ENCODE measurements at regions of chr15 and their contacts with region 1.

Region 1: GRCh38 chr15:35289024-35289617 is 204.0 kb upstream of the NANOGP8 start:
- DNase-seq: peak in 1 of 10 donors; percentile 5
- H3K4me3 ChIP-seq: no peak overlapping the region
- H3K27ac ChIP-seq: no peak overlapping the region
- H3K27me3 ChIP-seq: no peaks in the 10 kb centered on the region
- CTCF ChIP-seq: peak; percentile 47 to 88 (median 72)

Region 2: GRCh38 chr15:35078221-35078915 is 210.8 kb before region 1 on chr15:
- intact Hi-C with region 1: loop called in 1 of 2 experiments (anchors 2 kb)
- DNase-seq: peak in 4 of 10 donors; percentile 16 to 46 (median 36)
- H3K4me3 ChIP-seq: peak overlapping the region in 6 of 59 donors; percentile 12 to 24 (median 24)
- H3K27ac ChIP-seq: no peak overlapping the region
- H3K27me3 ChIP-seq: no peaks in the 10 kb centered on the region
- CTCF ChIP-seq: peak; percentile 65 to 89 (median 80)